Endothelial cell of umbilical vein (primary cell): ENCODE measurements at regions of chr5 and their contacts with region 1.

Region 1: GRCh38 chr5:96344678-96345577 is 88.1 kb downstream of the PCSK1 start:
- DNase-seq: peak; percentile 88
- H3K4me3 ChIP-seq: no peak overlapping the region
- H3K27ac ChIP-seq: no peak overlapping the region
- H3K4me1 ChIP-seq: peaks cover 25% of the 10 kb centered on the region
- H3K27me3 ChIP-seq: no peaks in the 10 kb centered on the region
- CTCF ChIP-seq: peak; percentile 42 to 47
- POLR2A ChIP-seq: no peak

Region 2: DNA sequence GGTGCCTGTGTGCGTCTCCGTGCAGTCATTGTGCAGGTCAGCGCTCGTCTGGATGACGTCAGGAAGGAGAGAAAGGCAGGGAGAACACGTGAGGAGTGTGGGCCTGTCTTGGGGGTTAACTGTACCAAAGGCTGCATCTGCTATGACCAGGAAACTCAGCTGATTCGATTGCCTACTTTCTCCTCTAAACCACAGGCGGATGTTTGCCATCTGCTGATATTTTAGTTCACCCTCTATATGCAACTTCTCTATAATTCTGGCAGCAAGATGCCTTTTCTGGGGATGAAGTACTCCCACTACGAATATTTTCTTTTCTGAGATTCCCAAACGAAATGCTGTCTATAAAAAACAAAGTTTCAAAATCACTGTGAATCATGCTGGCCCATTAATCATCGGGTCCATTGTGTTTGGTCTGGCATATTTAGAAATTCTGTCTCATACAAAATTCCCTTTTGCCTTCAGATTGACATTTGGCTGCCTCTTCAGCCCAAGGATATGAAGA is 63.4 kb after region 1 on chr5:
- CTCF ChIA-PET with region 1: interaction called, 24 read pairs
- POLR2A ChIA-PET with region 1: no interaction called
- dilution Hi-C with region 1: no loop called
- intact Hi-C with region 1: no loop called
- DNase-seq: peak; percentile 89
- H3K4me3 ChIP-seq: no peak overlapping the region
- H3K27ac ChIP-seq: peak overlapping the region; percentile 84
- H3K4me1 ChIP-seq: peaks cover 33% of the 10 kb centered on the region
- H3K27me3 ChIP-seq: no peaks in the 10 kb centered on the region
- CTCF ChIP-seq: no peak
- POLR2A ChIP-seq: no peak

Region 3: GRCh38 chr5:96536991-96537785 is 192.3 kb after region 1 on chr5:
- CTCF ChIA-PET with region 1: no interaction called
- POLR2A ChIA-PET with region 1: no interaction called
- dilution Hi-C with region 1: no loop called
- intact Hi-C with region 1: no loop called
- DNase-seq: peak; percentile 87
- H3K4me3 ChIP-seq: no peak overlapping the region
- H3K27ac ChIP-seq: peak overlapping the region; percentile 100
- H3K4me1 ChIP-seq: peaks cover 37% of the 10 kb centered on the region
- H3K27me3 ChIP-seq: no peaks in the 10 kb centered on the region
- CTCF ChIP-seq: no peak
- POLR2A ChIP-seq: peak; percentile 37

Region 4: GRCh38 chr5:96548947-96549346 is 204.0 kb after region 1 on chr5:
- CTCF ChIA-PET with region 1: interaction called, 10 read pairs
- POLR2A ChIA-PET with region 1: no interaction called
- dilution Hi-C with region 1: no loop called
- intact Hi-C with region 1: no loop called
- DNase-seq: no peak
- H3K4me3 ChIP-seq: no peak overlapping the region
- H3K27ac ChIP-seq: no peak overlapping the region
- H3K4me1 ChIP-seq: no peaks in the 10 kb centered on the region
- H3K27me3 ChIP-seq: no peaks in the 10 kb centered on the region
- CTCF ChIP-seq: no peak
- POLR2A ChIP-seq: no peak

Region 5: DNA sequence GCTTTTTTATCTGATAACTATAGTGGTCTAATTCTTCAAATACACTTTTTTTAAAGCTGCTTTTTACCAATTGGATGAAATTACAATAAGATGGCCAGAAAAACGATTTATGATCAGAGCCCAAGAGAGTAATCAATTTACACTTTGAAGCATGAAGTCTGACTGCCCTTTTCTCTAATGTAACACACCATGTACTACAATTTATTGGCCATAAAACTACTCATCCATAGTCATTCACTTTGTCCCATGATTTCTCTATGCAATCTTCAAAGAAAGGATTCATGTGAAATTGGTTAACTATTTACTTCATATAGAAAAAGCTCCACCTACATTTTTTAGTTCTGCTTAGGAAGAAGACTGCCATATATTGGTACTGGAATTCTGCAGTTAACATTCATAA is 243.6 kb after region 1 on chr5:
- CTCF ChIA-PET with region 1: interaction called, 33 read pairs
- POLR2A ChIA-PET with region 1: no interaction called
- dilution Hi-C with region 1: no loop called
- intact Hi-C with region 1: no loop called
- DNase-seq: no peak
- H3K4me3 ChIP-seq: peak overlapping the region in 1 of 3 experiments; percentile 23
- H3K27ac ChIP-seq: peak overlapping the region; percentile 26
- H3K4me1 ChIP-seq: peaks cover 88% of the 10 kb centered on the region
- H3K27me3 ChIP-seq: no peaks in the 10 kb centered on the region
- CTCF ChIP-seq: no peak
- POLR2A ChIP-seq: no peak

Region 6: GRCh38 chr5:96614110-96614691 is 269.3 kb after region 1 on chr5:
- CTCF ChIA-PET with region 1: interaction called, 54 read pairs
- POLR2A ChIA-PET with region 1: no interaction called
- dilution Hi-C with region 1: no loop called
- intact Hi-C with region 1: loop called (anchors 1 kb)
- DNase-seq: peak; percentile 92
- H3K4me3 ChIP-seq: peak overlapping the region in 2 of 3 experiments; percentile 25 to 72
- H3K27ac ChIP-seq: peak overlapping the region; percentile 92
- H3K4me1 ChIP-seq: peaks cover 28% of the 10 kb centered on the region
- H3K27me3 ChIP-seq: no peaks in the 10 kb centered on the region
- CTCF ChIP-seq: peak; percentile 33 to 51
- POLR2A ChIP-seq: no peak

Region 7: DNA sequence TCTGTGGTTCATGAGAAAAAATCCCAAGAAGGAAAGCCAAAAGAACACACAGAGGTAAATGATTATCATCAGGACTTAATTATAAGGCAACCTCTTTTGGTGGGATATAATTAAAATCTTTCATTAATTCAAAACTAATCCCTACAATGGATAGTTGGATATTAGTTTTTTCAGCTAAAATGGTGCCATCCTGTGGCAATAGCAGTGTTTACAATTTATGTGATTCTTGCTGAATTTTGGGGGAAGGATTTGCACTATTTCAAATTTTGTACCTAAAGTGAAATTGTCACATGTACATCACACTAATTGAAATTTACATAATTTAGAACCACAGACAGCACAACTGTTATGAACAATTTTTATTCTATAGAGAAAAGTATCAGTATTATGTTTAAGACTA is 384.2 kb after region 1 on chr5:
- CTCF ChIA-PET with region 1: interaction called, 15 read pairs
- POLR2A ChIA-PET with region 1: no interaction called
- dilution Hi-C with region 1: no loop called
- intact Hi-C with region 1: loop called (anchors 2 kb)
- DNase-seq: no peak
- H3K4me3 ChIP-seq: no peak overlapping the region
- H3K27ac ChIP-seq: no peak overlapping the region
- H3K4me1 ChIP-seq: no peaks in the 10 kb centered on the region
- H3K27me3 ChIP-seq: no peaks in the 10 kb centered on the region
- CTCF ChIP-seq: no peak
- POLR2A ChIP-seq: no peak

Region 8: GRCh38 chr5:97162045-97162444 is 817.1 kb after region 1 on chr5:
- CTCF ChIA-PET with region 1: interaction called, 10 read pairs
- POLR2A ChIA-PET with region 1: no interaction called
- dilution Hi-C with region 1: no loop called
- intact Hi-C with region 1: loop called (anchors 2 kb)
- DNase-seq: peak; percentile 86
- H3K4me3 ChIP-seq: no peak overlapping the region
- H3K27ac ChIP-seq: no peak overlapping the region
- H3K4me1 ChIP-seq: no peaks in the 10 kb centered on the region
- H3K27me3 ChIP-seq: no peaks in the 10 kb centered on the region
- CTCF ChIP-seq: peak; percentile 68 to 79
- POLR2A ChIP-seq: no peak